Posterior vena cava (tissue), 2 donors: ENCODE measurements at regions of chrX and their contacts with region 1.

Region 1: DNA sequence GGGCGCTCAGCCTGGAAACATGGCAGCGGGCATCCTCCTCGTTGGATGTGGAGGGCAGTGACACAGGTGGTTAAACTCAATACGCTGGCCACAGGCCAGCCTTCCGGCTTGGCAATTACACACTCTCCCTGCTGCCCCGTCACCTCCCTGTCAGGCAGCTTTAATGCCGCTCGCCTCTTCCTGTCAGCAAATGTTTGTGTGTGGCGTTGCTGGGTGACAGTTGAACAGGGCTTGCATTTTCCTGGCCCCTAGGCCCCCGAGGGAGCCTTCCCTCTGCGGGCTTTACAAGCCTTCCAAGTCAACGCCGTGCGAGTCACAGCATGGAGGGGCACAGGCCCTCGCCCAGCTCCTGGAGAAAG is 620.0 kb downstream of the BCOR start:
- DNase-seq: peak; percentile 89

Region 2: DNA sequence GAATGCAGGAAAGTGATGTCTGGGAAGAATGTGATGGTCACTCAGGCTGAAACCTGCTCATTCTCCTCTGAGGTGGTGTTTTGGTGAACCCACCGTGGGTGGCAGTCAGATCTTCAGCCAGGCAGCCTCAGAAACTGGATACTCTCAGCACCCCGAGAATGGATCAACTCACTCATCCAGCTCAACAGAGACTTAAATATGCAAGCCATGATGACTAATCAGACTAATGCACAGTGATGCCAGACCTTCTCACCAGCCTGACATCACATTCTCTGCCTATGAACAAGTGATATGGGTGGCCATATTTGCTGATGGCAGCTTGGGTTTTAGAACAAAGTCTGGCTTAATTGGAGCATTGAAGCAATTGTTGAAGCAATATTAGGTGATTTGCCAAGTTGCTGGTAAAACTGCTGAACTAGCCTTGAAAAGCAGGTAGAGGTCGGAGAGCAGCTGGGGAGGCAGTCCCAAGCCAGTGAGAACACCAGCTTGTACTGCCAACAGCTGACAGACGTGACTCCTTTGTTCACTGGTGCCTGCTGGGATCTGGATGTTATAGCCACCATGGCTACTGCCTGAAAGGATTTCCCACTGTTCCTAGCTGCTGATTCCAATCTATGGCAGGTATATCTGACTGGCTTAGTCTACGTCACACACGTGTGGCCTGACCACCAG is 68.4 kb before region 1 on chrX:
- intact Hi-C with region 1: no loop called
- DNase-seq: no peak

Region 3: GRCh38 chrX:39427906-39428305 is 49.8 kb before region 1 on chrX:
- intact Hi-C with region 1: no loop called
- DNase-seq: no peak

Region 4: GRCh38 chrX:39497702-39498265 is 20.0 kb after region 1 on chrX:
- intact Hi-C with region 1: no loop called
- DNase-seq: no peak

Region 5: GRCh38 chrX:39519030-39519488 is 41.3 kb after region 1 on chrX:
- intact Hi-C with region 1: loop called in 1 of 2 experiments (anchors 1 kb)
- DNase-seq: no peak